HEK293T (cell line): ENCODE measurements at regions of chr11 and their contacts with region 1.

Region 1: DNA sequence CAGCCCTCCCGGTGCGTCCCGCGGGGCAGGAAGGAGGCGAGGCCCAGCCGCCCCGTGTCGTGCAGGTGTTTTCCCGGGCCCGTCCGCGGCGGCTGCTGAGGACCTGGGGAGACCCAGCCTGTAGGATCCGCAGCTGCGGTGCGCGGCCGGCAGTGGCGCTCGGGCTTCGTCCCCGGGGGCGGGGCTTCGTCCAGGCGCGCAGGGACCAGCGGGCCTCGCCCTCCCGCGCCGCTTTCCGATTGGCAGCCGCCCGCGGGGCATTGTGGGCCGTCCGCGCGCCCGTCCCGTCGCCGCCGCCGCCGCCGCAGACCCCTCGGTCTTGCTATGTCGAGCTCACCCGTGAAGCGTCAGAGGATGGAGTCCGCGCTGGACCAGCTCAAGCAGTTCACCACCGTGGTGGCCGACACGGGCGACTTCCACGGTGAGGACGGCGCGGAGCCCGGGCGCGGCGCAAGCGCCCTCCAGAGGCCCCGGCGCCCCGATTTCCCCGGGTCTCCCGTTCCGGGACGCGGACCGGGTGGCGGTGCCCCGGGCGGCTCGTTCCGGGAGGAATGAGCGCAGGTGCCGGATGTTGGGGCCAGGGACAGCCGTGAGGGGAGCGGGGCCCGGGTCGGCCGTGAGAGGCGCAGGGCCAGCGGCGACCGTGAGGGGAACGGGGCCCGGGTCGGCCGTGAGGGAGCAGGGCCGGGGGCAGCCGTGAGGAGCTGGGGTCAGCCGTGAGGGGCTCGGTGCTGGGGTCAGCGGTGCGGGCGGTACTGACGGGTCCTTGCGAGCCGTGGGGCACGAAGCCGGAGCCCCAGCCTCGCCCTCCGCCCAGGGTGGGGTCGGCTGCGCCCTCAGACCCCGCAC is at the start of gene TALDO1:
- DNase-seq: peak; percentile 95

Region 2: DNA sequence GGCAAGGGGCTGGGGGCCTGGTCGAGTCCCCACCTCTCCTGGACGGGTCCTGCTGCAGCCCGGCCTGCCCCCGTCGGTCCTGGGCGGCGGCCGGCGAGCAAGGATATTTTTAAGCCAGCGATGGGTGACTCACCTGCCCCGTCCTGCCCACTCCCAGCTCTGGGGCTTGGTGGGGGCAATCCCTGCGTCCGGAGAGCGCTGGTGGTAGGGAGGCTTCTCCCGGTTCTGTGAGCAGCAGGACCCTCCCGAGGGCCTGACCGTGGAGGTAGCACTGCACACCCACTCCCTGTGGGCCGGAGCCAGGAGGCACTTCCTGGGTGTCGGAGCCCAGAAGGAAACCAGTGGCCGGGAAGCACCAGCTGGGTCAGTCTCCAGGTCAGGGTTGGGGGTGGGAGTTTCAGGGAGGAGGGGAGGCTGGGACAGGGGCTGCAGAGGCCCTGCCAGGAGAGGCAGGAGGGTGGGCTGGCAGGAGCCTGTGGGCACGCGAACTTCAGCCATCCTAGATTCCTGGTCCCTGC is 40.9 kb before region 1 on chr11:
- CTCF ChIA-PET with region 1: no interaction called
- POLR2A ChIA-PET with region 1: no interaction called
- DNase-seq: no peak

Region 3: DNA sequence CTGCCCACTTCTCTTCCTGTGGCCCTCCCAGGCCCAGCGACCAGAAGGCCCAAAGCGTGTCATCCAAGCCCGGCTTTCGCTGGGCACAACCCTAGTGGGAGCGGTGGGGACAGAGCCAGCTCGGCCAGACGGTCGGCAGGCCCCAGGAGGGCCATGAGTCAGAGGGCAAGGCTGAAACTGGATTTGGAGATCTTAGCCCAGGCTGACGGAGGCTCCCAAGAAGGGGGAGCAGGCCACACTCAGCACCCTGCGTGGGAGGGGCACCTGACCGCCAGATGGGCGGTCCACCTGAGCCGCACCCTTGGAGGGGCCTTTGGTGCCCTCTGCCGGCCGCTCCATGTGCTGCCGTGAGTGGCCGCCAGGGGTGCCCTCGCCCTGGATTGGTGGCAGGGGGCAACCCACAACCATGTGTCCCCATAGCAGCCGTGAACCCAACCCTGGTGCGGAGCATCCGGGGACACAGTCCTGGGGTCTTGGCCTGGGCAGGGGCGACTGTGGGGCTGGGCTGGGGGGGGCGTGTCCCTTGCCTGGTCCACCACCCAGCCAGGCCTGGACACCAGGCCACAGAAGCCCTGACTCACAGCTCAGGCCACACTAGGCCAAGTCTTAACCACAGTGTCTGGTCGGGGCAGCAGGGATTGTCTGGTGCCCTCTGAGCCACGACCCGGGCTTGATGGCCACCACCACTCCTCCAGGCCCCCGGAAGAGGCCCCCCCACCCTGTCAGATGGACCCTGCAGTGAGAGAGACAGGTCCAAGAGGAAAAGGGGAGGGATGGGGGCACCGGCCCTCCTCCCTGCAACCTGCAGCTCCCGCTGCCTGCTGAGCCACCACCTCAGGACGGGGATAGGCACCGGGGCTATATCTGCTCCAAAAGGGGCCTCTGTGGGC is 19.3 kb before region 1 on chr11:
- CTCF ChIA-PET with region 1: interaction called, 6 read pairs
- POLR2A ChIA-PET with region 1: interaction called, 11 read pairs
- DNase-seq: peak; percentile 87

Region 4: DNA sequence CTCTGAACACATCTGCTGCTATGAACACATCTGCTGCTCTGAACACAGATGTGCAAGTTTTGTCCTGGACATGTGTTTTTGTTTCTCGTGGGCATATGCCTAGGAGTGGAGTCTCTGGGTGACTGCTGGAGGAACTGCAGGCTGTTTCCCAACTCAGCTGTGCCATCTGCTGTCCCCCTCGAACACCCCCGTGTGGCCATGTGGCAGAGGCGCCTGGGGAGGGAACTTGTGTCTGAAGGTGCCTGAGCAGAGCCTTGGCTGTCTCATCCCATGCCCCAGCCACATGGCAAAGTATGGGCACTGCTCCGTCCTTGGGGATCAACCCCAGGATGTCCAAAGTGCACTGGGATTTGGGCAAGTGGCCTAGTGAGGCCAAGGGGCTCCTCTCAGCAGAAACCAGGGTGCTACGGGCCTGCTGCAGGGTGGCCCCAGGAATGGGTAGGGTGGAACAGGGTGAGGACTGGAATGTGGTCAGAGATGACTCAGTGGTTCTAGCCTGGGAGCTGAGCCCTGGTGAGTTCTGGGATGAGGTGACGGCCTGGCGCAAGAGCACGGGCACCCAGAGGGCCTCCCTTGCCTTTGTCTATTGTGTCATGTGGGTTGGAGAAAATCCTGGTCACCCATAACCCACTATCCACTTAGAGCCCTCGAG is 15.2 kb after region 1 on chr11:
- CTCF ChIA-PET with region 1: no interaction called
- POLR2A ChIA-PET with region 1: interaction called, 13 read pairs
- DNase-seq: no peak

Region 5: GRCh38 chr11:859509-860131 is 112.2 kb after region 1 on chr11:
- CTCF ChIA-PET with region 1: no interaction called
- POLR2A ChIA-PET with region 1: no interaction called
- DNase-seq: no peak